ENCODE measurements at regions of chr13 and their contacts with region 1.

Region 1: DNA sequence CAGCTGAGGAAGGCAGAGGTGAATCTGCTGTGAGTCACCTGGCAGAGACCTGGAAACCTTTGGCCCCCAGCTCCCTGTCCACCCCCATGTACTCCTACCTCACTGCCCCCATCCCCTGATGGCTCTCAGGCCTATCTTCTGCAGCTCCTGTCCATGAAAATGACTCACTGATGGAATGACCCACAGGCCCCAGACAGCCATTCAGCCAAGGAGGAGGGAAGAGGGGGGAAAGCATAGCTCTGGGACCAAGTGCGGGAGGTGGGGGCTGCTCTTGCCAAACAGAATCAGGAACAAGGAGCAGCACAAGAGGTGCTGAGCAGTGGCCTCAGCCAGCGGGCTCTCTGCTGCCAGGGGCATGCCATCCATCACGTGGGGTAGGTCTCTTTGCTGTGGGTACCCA is 111.4 kb upstream of the C1QTNF9B start:
- DNase-seq: no peak
- H3K4me3 ChIP-seq: no peak overlapping the region
- H3K27me3 ChIP-seq: no peaks in the 10 kb centered on the region; the same call in 1 of the 2 replicates
- CTCF ChIP-seq: no peak

Region 2: GRCh38 chr13:24228852-24229458 is 220.3 kb after region 1 on chr13:
- CTCF ChIA-PET with region 1: interaction called, 17 read pairs
- POLR2A ChIA-PET with region 1: no interaction called
- DNase-seq: no peak
- H3K4me3 ChIP-seq: no peak overlapping the region
- H3K27me3 ChIP-seq: no peaks in the 10 kb centered on the region
- CTCF ChIP-seq: peak; percentile 93